ENCODE measurements at regions of chr20 and their contacts with region 1.

Region 1: GRCh38 chr20:43749734-43750294 is 23.0 kb upstream of the GTSF1L start:
- DNase-seq: peak; percentile 92
- ATAC-seq: peak; percentile 10
- H3K4me3 Mint-ChIP-seq: no peak overlapping the region
- H3K27ac Mint-ChIP-seq: peak overlapping the region; percentile 81
- H3K4me1 Mint-ChIP-seq: peaks cover 42% of the 10 kb centered on the region
- H3K27me3 Mint-ChIP-seq: peaks cover 4% of the 10 kb centered on the region

Region 2: DNA sequence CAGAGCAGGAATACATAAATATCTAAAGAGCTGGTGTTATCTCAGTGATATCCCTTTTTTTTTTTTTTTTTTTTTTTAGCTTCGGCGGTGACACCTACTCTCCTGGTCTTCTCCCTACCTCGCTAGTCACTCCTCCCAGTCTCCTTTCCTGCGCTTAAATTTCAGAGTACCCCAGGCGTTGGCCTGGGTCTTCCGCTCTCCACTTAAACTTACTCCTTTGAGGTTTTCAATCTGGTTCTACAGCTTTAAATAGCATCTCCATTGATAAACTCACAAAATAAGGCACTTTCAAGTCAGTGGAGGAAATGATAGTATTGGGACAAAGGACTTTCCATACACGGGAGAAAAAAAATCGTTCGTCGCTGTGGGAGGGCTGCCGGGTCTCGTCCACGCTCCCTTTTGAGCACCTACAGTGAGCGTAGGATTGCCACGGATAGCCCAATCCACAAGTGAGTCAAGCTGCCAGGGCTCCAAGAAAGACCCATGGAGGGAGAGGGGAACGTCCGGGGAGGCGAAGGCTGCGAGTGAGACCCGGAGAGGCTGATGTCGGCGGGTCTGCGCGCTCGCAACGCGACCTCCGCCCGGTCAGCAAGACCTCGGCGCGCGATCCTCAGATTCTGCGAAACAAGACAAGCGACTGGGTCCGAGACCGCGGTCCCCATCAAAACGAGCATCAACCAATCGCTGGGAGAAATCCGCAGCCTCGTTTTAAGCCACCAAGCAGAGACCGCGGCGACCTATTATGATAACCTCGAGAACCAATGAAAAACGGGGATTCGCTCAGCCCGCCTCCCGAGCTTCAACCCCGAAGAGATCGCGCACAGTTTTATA is 292.8 kb before region 1 on chr20:
- CTCF ChIA-PET with region 1: interaction called, 3 read pairs
- POLR2A ChIA-PET with region 1: interaction called, 3 read pairs
- intact Hi-C with region 1: loop called (anchors 1 kb)
- DNase-seq: peak; percentile 92
- ATAC-seq: peak; percentile 86
- H3K4me3 Mint-ChIP-seq: peak overlapping the region; percentile 91
- H3K27ac Mint-ChIP-seq: peak overlapping the region; percentile 99
- H3K4me1 Mint-ChIP-seq: peaks cover 30% of the 10 kb centered on the region
- H3K27me3 Mint-ChIP-seq: peaks cover 2% of the 10 kb centered on the region

Region 3: GRCh38 chr20:43721429-43722152 is 28.2 kb before region 1 on chr20:
- CTCF ChIA-PET with region 1: no interaction called
- POLR2A ChIA-PET with region 1: no interaction called
- intact Hi-C with region 1: no loop called
- DNase-seq: no peak
- ATAC-seq: peak; percentile 76
- H3K4me3 Mint-ChIP-seq: peak overlapping the region; percentile 57
- H3K27ac Mint-ChIP-seq: peak overlapping the region; percentile 63
- H3K4me1 Mint-ChIP-seq: peaks cover 50% of the 10 kb centered on the region
- H3K27me3 Mint-ChIP-seq: no peaks in the 10 kb centered on the region

Region 4: DNA sequence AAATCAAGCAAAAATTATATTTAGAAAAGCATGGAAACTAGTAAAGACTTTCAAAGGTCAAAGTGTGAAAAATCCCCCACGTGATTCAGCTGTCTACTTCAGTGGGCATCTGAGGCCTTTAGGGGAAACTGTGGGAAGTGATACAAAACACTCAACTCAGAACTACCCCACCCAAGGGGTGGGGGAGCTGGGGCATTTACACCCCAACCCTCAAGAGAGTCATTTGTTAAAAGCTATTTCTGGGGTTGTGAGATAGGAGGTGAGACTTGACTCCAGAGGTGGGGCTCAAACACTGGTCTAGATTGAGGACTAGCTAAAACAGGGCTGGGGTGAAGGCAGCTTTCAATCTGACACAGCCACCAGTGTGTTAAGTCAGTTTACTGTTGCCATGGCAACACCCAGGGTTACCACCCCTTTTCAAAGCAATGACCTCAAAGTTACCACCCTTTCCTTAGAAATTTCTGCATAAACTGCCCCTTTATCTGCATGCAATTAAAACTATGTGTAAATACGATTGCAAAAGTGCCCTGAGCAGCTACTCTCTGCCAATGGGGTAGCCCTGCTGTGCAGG is 13.1 kb before region 1 on chr20:
- CTCF ChIA-PET with region 1: interaction called, 18 read pairs
- POLR2A ChIA-PET with region 1: interaction called, 4 read pairs
- intact Hi-C with region 1: loop called in 1 of 2 experiments (anchors 1 kb)
- DNase-seq: peak; percentile 75
- ATAC-seq: peak; percentile 94
- H3K4me3 Mint-ChIP-seq: no peak overlapping the region
- H3K27ac Mint-ChIP-seq: peak overlapping the region; percentile 9
- H3K4me1 Mint-ChIP-seq: peaks cover 27% of the 10 kb centered on the region
- H3K27me3 Mint-ChIP-seq: no peaks in the 10 kb centered on the region

Region 5: GRCh38 chr20:43840382-43841070 is 90.7 kb after region 1 on chr20:
- CTCF ChIA-PET with region 1: interaction called, 11 read pairs
- POLR2A ChIA-PET with region 1: interaction called, 5 read pairs
- intact Hi-C with region 1: loop called (anchors 1 to 2 kb)
- DNase-seq: peak; percentile 66
- ATAC-seq: peak; percentile 63
- H3K4me3 Mint-ChIP-seq: no peak overlapping the region
- H3K27ac Mint-ChIP-seq: no peak overlapping the region
- H3K4me1 Mint-ChIP-seq: peaks cover 30% of the 10 kb centered on the region
- H3K27me3 Mint-ChIP-seq: peaks cover 7% of the 10 kb centered on the region

Region 6: DNA sequence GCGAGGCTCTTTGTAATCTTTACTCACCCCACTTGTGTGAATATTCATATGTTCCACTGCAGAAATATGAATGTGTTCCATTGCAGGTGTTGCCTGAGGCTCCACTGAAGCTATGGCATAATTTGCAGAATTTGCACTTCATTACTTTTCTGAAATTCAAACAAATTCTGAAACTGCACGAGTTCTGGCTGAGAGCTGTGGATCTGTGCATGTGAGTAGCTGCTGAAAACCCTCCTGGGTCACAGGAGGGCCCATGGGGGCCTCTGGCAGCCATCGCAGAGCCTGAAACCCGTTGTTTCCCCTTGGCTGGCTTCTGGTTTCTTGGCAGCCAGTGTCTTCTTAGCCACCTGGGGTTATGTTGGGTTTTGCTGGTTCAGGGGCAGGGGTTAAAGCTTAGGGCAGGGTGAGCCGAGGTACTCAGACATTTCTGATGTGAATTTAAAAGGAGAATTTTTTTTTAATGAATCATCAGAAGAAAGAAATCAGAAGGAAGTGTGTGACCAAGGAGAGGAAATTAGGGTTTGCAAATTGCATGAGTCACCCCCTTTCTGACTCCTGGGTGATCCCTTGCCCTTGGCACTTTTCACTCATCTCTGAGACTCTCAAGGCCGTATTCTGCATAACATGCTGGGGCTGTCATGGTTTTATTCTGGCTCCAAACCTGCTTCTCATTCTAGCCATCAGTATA is 205.4 kb after region 1 on chr20:
- CTCF ChIA-PET with region 1: interaction called, 12 read pairs
- POLR2A ChIA-PET with region 1: interaction called, 3 read pairs
- intact Hi-C with region 1: loop called (anchors 1 kb)
- DNase-seq: peak; percentile 72
- ATAC-seq: peak; percentile 93
- H3K4me3 Mint-ChIP-seq: peak overlapping the region; percentile 8
- H3K27ac Mint-ChIP-seq: peak overlapping the region; percentile 71
- H3K4me1 Mint-ChIP-seq: peaks cover 76% of the 10 kb centered on the region
- H3K27me3 Mint-ChIP-seq: peaks cover 35% of the 10 kb centered on the region

Region 7: GRCh38 chr20:44069203-44070011 is 319.6 kb after region 1 on chr20:
- CTCF ChIA-PET with region 1: interaction called, 3 read pairs
- POLR2A ChIA-PET with region 1: interaction called, 4 read pairs
- intact Hi-C with region 1: loop called (anchors 2 kb)
- DNase-seq: peak; percentile 74
- ATAC-seq: peak; percentile 70
- H3K4me3 Mint-ChIP-seq: peak overlapping the region; percentile 61
- H3K27ac Mint-ChIP-seq: peak overlapping the region; percentile 94
- H3K4me1 Mint-ChIP-seq: peaks cover 68% of the 10 kb centered on the region
- H3K27me3 Mint-ChIP-seq: no peaks in the 10 kb centered on the region

Region 8: GRCh38 chr20:44187051-44187762 is 437.4 kb after region 1 on chr20 and contains the start of gene JPH2:
- CTCF ChIA-PET with region 1: no interaction called
- POLR2A ChIA-PET with region 1: no interaction called
- intact Hi-C with region 1: no loop called
- DNase-seq: no peak
- ATAC-seq: no peak
- H3K4me3 Mint-ChIP-seq: no peak within 1 kb of the TSS
- H3K27ac Mint-ChIP-seq: no peak within 1 kb of the TSS
- H3K4me1 Mint-ChIP-seq: peaks cover 4% of the 10 kb centered on the region
- H3K27me3 Mint-ChIP-seq: peaks cover 42% of the 10 kb centered on the region
- total RNA-seq, gene JPH2: 0.07 TPM

Region 9: DNA sequence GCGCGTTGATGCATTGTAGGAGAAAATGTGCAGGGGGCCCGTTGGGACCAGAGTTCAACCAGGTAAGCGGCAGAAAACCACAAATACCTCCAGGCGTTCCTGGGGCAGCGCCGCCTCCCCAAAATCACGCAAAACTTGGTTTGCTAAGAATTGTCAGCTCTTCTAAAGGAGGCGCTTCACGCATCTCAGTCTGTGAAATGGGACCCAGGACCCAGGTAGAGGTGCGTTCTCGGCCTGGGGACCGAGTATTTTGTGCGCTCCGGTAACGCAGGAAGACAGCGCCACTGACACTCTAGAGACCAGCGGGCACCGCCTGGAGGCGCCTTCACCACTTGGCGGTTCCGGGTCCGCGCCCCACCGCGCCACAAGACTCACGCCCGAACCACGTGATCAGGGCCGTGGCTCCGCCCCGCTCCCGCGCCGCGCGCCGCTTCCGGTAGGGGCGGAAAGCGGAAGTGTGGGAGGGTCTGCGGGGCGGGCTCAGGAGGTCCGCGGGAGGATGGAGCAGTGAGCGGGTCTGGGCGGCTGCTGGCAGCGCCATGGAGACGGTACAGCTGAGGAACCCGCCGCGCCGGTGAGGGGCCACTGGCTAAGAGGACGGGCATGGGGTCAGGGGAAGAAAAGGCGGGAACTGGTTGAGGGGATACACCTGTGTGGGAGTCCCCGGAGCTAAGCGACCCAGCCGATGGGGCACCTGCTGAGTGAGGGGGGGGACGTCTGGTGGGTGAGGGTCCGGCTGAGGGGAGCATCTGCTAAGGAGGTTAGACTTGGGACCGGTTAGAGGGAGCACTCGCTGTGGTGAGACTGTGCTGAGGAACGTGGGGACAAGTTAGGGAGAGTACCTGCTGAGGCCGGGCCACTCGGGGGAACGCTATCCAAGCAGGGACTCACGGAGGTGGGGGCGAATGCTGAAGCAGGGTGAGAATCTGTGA is 1216.5 kb after region 1 on chr20 and contains the start of gene STK4:
- CTCF ChIA-PET with region 1: no interaction called
- POLR2A ChIA-PET with region 1: no interaction called
- intact Hi-C with region 1: loop called in 1 of 2 experiments (anchors 5 kb)
- DNase-seq: peak; percentile 97
- ATAC-seq: peak; percentile 71
- H3K4me3 Mint-ChIP-seq: peak within 1 kb of the TSS; percentile 94
- H3K27ac Mint-ChIP-seq: peak within 1 kb of the TSS; percentile 98
- H3K4me1 Mint-ChIP-seq: peaks cover 55% of the 10 kb centered on the region
- H3K27me3 Mint-ChIP-seq: no peaks in the 10 kb centered on the region
- total RNA-seq, gene STK4: 156 to 164 TPM